ENCODE measurements at regions of chr17 and their contacts with region 1.

Region 1: DNA sequence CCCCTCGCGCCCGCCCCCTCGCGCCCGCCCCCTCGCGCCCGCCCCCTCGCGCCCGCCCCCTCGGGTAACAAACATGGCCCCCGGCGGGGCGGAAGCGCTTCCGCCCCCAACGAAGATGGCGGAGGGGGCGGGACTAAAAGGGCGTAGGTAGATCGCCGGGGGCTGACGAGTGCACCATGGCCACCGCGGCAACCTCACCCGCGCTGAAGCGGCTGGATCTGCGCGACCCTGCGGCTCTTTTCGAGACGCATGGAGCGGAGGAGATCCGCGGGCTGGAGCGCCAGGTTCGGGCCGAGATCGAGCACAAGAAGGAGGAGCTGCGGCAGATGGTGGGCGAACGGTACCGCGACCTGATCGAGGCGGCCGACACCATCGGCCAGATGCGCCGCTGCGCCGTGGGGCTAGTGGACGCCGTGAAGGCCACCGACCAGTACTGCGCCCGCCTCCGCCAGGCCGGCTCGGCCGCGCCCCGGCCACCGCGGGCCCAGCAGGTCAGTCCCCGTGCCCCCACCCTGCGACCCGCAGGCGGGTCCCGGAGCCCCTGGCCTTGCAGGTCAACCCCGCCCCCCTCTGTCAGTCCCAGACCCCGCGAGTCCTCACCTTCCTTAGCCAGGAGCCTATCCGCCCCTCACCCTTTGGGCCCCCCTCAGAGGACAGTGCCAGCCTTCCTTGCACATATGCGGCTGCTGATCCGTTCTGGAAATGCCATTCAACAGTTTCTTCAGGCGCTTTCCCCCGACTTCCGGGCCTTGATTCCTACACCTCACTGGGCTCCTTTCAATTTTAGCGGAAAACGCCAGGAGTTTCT is at the start of gene COG1:
- DNase-seq: peak; percentile 55
- H3K4me3 Mint-ChIP-seq: peak within 1 kb of the TSS; percentile 96
- H3K27ac Mint-ChIP-seq: peak within 1 kb of the TSS; percentile 96
- H3K4me1 Mint-ChIP-seq: peaks cover 19% of the 10 kb centered on the region
- H3K27me3 Mint-ChIP-seq: no peaks in the 10 kb centered on the region
- total RNA-seq, gene COG1: 34.3 and 37.1 TPM in 2 replicates

Region 2: GRCh38 chr17:72592242-72592966 is 600.7 kb before region 1 on chr17:
- intact Hi-C with region 1: loop called (anchors 1 kb)
- DNase-seq: peak; percentile 66
- H3K4me3 Mint-ChIP-seq: peak overlapping the region; percentile 88
- H3K27ac Mint-ChIP-seq: peak overlapping the region; percentile 24
- H3K4me1 Mint-ChIP-seq: peaks cover 37% of the 10 kb centered on the region
- H3K27me3 Mint-ChIP-seq: peaks cover 50% of the 10 kb centered on the region

Region 3: GRCh38 chr17:73092523-73093135 is 100.5 kb before region 1 on chr17 and contains the start of gene SLC39A11:
- intact Hi-C with region 1: loop called (anchors 1 kb)
- DNase-seq: peak; percentile 89
- H3K4me3 Mint-ChIP-seq: peak within 1 kb of the TSS; percentile 100
- H3K27ac Mint-ChIP-seq: peak within 1 kb of the TSS; percentile 98
- H3K4me1 Mint-ChIP-seq: peaks cover 22% of the 10 kb centered on the region
- H3K27me3 Mint-ChIP-seq: peaks cover 6% of the 10 kb centered on the region
- total RNA-seq, gene SLC39A11: 20.9 and 25.7 TPM in 2 replicates

Region 4: GRCh38 chr17:73126716-73127473 is 66.2 kb before region 1 on chr17:
- intact Hi-C with region 1: no loop called
- DNase-seq: no peak
- H3K4me3 Mint-ChIP-seq: no peak overlapping the region
- H3K27ac Mint-ChIP-seq: no peak overlapping the region
- H3K4me1 Mint-ChIP-seq: no peaks in the 10 kb centered on the region
- H3K27me3 Mint-ChIP-seq: no peaks in the 10 kb centered on the region

Region 5: DNA sequence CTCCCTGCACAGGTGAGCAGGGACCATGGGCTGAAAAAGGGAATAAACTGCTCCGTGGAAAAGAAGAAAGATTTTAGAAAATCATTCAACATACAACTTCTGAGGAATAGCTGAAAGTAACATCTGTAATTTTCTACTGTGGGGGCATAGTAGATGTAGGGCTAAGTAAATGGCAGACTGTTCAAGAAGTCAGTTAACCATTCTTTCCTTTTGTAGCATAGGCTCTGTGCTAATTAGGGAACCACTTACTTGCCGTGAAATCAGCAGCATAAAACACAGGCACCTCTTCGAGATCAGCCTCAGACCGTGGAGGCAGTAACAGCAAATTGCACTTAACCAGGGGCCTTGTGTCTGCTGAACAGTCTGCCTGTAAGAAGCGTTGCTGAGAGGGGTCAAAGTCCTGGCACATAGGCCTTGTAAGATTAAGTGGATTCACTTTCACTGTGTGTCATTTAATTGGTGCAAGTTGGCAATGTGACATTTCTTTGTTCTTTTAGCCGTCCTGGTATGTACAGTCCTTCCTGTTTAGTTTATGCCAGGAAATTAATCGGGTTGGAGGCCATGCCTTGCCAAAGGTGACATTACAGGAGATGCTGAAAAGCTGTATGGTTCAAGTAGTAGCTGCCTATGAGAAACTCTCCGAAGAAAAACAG is 10.2 kb after region 1 on chr17:
- intact Hi-C with region 1: no loop called
- DNase-seq: no peak
- H3K4me3 Mint-ChIP-seq: no peak overlapping the region
- H3K27ac Mint-ChIP-seq: peak overlapping the region; percentile 25
- H3K4me1 Mint-ChIP-seq: peaks cover 21% of the 10 kb centered on the region
- H3K27me3 Mint-ChIP-seq: no peaks in the 10 kb centered on the region

Region 6: GRCh38 chr17:73226556-73227172 is 33.6 kb after region 1 on chr17:
- intact Hi-C with region 1: loop called (anchors 1 kb)
- DNase-seq: no peak
- H3K4me3 Mint-ChIP-seq: peak overlapping the region; percentile 64
- H3K27ac Mint-ChIP-seq: peak overlapping the region; percentile 70
- H3K4me1 Mint-ChIP-seq: peaks cover 65% of the 10 kb centered on the region
- H3K27me3 Mint-ChIP-seq: no peaks in the 10 kb centered on the region

Region 7: GRCh38 chr17:73255671-73256181 is 62.6 kb after region 1 on chr17:
- intact Hi-C with region 1: loop called (anchors 1 kb)
- DNase-seq: peak; percentile 22
- H3K4me3 Mint-ChIP-seq: no peak overlapping the region
- H3K27ac Mint-ChIP-seq: no peak overlapping the region
- H3K4me1 Mint-ChIP-seq: no peaks in the 10 kb centered on the region
- H3K27me3 Mint-ChIP-seq: no peaks in the 10 kb centered on the region

Region 8: GRCh38 chr17:73371285-73371684 is 178.2 kb after region 1 on chr17:
- intact Hi-C with region 1: loop called (anchors 1 kb)
- DNase-seq: no peak
- H3K4me3 Mint-ChIP-seq: no peak overlapping the region
- H3K27ac Mint-ChIP-seq: no peak overlapping the region
- H3K4me1 Mint-ChIP-seq: no peaks in the 10 kb centered on the region
- H3K27me3 Mint-ChIP-seq: peaks cover 10% of the 10 kb centered on the region